ENCODE measurements at regions of chr11 and their contacts with region 1.

Region 1: DNA sequence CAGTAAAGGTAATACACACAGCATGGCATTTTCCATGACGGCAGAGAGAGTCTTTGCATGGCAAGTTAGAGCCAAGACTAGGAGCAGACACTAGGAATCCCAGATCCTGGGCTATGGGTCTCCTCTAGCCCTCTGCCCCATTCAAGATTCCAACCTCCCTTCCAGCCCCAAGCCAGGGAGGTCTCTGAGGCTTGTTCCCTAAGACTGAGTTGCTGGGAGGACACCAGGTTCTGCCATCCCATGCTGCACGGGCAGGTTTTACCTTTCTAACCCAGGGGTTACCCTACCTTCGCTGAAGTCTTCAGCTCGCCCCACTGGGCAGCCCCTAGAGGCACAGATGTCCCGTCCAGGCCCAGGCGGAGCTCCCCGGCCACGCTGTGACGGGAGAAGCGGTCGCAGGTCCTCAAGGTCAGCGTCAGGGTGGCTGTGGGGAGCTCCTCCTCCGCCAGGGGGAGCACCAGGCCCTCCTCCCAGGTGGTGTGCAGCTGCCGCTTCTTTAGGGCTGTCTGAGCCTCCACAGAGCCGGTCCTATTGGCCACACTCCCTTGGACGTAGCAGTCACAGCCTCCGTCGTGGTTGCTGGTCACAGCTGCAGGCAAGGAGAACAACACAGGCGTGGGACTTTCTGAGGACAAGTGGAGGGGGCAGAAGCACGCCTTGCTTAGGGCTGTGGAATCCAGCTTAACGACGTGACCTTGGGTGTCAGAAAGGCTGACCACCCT is 33.8 kb downstream of the SYT13 start:
- DNase-seq: peak; percentile 86

Region 2: GRCh38 chr11:45233121-45233803 is 19.0 kb before region 1 on chr11:
- CTCF ChIA-PET with region 1: interaction called, 15 read pairs
- POLR2A ChIA-PET with region 1: no interaction called
- DNase-seq: peak; percentile 87

Region 3: DNA sequence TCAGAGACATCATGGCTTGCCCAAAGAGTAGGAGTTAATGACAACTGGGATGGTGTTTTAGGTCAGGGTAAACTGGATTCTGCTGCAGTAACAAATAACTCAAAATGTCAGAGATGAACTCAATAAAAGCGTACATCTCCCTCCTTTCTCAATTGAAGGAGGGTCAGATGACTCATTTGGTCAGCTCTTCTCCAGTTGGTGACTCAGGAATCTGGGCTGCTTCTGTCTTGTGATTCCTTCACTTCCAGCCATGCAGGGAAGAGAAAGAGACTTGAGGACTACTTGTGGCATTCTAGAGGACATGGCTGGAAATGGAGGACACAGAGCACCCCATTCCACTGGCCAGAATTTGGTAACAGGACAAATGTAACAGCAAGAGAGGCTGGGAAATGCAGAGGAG is 37.1 kb after region 1 on chr11:
- CTCF ChIA-PET with region 1: interaction called, 11 read pairs
- POLR2A ChIA-PET with region 1: no interaction called
- DNase-seq: no peak

Region 4: GRCh38 chr11:45301537-45302246 is 49.4 kb after region 1 on chr11:
- CTCF ChIA-PET with region 1: no interaction called
- POLR2A ChIA-PET with region 1: no interaction called
- DNase-seq: no peak

Region 5: DNA sequence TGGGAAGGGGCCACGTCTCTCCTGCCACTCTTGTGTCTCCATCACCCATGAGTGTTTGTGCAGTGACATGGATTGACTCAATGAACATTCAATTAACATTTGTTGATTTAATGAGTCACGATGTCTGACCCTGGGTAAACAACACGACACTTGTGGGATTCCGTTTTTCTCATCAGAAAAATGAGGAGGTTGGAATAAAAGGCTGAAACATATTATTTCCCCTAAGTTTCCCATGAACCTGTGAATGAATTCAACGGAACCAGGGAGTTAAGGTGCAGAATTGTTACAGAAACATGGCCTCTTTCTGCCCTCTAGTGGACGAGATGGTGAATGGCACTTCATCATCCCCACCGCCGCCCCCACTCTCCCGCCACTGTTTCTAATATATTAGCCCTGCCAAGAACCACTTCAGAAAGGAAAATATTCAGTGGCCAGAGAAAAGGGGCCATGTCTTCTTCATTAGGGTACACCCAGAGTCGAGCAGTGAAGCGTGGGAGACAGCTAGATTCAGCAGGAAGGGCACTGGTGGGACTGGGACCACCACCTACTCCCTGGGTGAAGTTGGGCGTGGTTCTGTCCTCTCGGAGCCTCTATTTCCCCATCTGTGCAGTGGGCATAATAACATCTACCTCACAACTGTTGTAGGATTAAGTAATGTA is 80.1 kb after region 1 on chr11:
- CTCF ChIA-PET with region 1: interaction called, 12 read pairs
- POLR2A ChIA-PET with region 1: interaction called, 3 read pairs
- DNase-seq: peak; percentile 73

Measured in HEK293T (cell line).